ENCODE measurements at regions of chr14 and their contacts with region 1.

Region 1: GRCh38 chr14:75188520-75189268 is 12.3 kb upstream of the TMED10 start:
- DNase-seq: peak in 1 of 2 donors; percentile 56
- ATAC-seq: peak; percentile 28
- H3K4me3 ChIP-seq: no peak overlapping the region
- H3K27ac ChIP-seq: no peak overlapping the region
- H3K4me1 ChIP-seq: no peaks in the 10 kb centered on the region
- H3K27me3 ChIP-seq: no peaks in the 10 kb centered on the region

Region 2: DNA sequence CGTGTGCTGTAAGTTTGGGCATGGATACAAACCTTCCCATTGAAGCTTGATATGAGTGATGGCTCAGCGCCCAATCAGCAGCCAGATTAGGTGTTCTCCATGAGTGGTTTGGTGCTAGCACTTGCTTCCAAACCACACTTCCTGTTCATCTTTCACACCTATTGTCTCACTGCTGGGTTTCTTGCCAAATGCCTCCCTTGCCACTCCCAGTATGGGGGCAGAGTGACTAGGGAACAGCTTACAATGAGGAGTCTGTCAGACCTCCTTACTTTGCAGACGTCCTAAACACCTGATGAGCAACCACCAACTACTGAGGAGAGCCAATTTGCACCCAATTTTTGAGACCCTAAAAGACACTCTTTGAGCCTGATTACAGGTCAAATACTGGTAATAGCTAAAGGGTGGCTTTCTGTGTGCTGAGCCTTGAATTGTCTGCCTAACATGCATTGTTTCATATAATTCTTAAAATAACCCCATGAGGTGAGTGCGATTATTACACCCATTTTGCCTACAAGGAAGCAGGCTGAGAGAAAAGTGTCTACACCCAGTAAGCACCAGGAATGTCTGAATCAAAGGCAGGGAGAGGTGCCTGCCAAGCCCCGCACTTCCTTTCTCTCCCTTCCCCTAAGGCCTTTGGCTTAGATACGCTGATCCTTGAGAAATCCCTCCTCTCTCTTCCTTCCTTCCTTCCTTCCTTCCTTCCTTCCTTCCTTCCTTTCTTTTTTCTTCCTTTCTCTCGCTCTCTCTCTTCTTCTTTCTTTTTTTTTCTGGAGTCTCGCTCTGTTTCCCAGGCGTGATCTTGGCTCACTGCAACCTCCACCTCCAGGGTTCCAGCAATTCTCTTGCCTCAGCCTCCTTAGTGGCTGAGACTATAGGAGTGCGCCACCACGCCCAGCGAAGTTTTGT is 41.7 kb after region 1 on chr14:
- intact Hi-C with region 1: loop called (anchors 5 kb)
- DNase-seq: no peak
- ATAC-seq: no peak
- H3K4me3 ChIP-seq: no peak overlapping the region
- H3K27ac ChIP-seq: no peak overlapping the region
- H3K4me1 ChIP-seq: no peaks in the 10 kb centered on the region
- H3K27me3 ChIP-seq: no peaks in the 10 kb centered on the region

Measured in aorta (tissue), 5 donors.